ENCODE measurements at regions of chr17 and their contacts with region 1.

Region 1: DNA sequence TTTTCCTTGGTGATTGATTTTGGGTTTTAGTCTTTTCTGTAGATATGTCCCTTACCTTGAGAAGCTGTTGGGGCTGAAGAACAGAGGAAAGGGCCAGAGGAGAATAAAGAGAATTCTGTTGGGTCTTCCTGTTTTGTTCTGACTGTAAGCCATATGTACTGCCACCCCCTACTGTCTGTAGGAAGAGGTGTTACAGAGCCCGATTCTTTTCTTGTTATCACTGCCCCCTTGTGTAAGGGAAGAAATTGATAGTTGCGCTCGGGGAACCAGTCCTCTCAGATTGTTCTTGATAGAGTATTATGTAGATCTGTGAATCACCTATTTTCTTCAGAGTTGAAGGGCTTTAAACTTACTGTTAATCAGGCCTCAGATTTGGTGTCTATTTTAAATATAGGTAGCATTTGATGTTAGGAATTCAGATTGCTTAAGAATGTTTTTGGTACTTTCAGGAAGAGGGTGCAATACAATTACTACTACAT is 2.4 kb downstream of the TANC2 start:
- DNase-seq: peak; percentile 83
- ATAC-seq: peak; percentile 39
- H3K4me3 ChIP-seq: no peak overlapping the region
- H3K4me3 Mint-ChIP-seq: peak overlapping the region; percentile 74
- H3K27ac ChIP-seq: no peak overlapping the region
- H3K27ac Mint-ChIP-seq: peak overlapping the region; percentile 48
- H3K4me1 ChIP-seq: peaks cover 18 to 20% of the 10 kb centered on the region in 2 donors
- H3K4me1 Mint-ChIP-seq: peaks cover 21% of the 10 kb centered on the region
- H3K27me3 ChIP-seq: no peaks in the 10 kb centered on the region
- H3K27me3 Mint-ChIP-seq: no peaks in the 10 kb centered on the region
- CTCF ChIP-seq: peak; percentile 85

Region 2: DNA sequence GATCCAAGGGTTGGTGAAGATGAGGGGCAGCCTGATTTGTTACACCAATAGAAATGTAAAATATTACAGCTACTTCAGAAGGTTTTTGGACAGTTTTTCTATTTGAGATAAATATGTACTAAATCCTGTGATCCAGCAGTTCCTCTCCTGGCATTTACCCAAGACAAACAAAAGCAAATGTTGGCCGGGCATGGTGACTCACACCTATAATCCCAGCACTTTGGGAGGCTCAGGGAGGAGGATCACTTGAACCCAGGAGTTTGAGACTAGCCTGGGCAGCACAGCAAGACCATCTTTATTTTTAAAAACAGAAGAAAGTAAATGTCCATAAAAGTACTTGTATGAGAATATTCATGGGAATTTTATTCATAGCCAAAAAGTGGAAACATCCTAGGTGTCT is 405.8 kb before region 1 on chr17:
- CTCF ChIA-PET with region 1: no interaction called
- POLR2A ChIA-PET with region 1: no interaction called
- intact Hi-C with region 1: loop called (anchors 10 kb)
- DNase-seq: no peak
- ATAC-seq: no peak
- H3K4me3 ChIP-seq: no peak overlapping the region
- H3K4me3 Mint-ChIP-seq: no peak overlapping the region
- H3K27ac ChIP-seq: no peak overlapping the region
- H3K27ac Mint-ChIP-seq: no peak overlapping the region
- H3K4me1 ChIP-seq: no peaks in the 10 kb centered on the region
- H3K4me1 Mint-ChIP-seq: peaks cover 6% of the 10 kb centered on the region
- H3K27me3 ChIP-seq: no peaks in the 10 kb centered on the region
- H3K27me3 Mint-ChIP-seq: no peaks in the 10 kb centered on the region
- CTCF ChIP-seq: no peak

Region 3: GRCh38 chr17:62724398-62725146 is 243.9 kb before region 1 on chr17:
- CTCF ChIA-PET with region 1: no interaction called
- POLR2A ChIA-PET with region 1: no interaction called
- intact Hi-C with region 1: loop called (anchors 5 kb)
- DNase-seq: peak; percentile 85
- ATAC-seq: peak; percentile 88
- H3K4me3 ChIP-seq: peak overlapping the region in 4 of 5 experiments; percentile 21 to 56 (median 38)
- H3K4me3 Mint-ChIP-seq: peak overlapping the region; percentile 82
- H3K27ac ChIP-seq: peak overlapping the region; percentile 74 to 80
- H3K27ac Mint-ChIP-seq: peak overlapping the region; percentile 87
- H3K4me1 ChIP-seq: peaks cover 32 to 46% of the 10 kb centered on the region in 2 donors
- H3K4me1 Mint-ChIP-seq: peaks cover 39% of the 10 kb centered on the region
- H3K27me3 ChIP-seq: no peaks in the 10 kb centered on the region
- H3K27me3 Mint-ChIP-seq: peaks cover 7% of the 10 kb centered on the region
- CTCF ChIP-seq: no peak

Region 4: DNA sequence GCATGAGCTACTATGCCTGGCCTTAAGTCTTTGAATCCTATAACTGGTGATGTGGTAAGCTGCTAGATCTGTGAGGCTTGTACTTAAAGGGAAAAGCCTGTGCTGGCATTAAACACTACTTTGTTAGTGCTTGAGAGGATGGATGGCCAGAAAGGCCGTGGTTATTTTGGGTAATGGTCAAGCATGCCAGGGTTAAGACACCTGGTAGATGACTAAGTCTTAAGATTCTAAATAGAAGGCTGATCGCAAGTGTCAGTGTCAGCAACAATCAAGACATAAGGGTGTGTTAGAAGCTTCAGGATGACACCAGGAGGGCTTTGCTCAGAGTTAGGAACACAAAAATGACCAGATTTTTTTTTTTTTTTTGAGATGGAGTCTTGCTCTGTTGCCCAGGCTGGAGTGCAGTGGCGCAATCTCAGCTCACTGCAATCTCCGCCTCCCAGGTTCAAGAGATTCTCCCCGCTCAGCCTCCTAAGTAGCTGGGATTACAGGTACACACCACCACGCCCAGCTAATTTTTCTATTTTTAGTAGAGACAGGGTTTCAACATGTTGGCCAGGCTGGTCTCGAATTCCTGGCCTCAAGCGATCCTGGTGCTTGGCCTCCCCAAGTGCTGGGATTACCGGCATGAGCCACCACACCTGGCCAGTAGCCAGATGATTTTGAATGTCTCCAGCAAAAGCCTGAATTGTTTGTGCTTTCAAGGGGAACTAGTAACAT is 118.7 kb before region 1 on chr17:
- CTCF ChIA-PET with region 1: no interaction called
- POLR2A ChIA-PET with region 1: no interaction called
- intact Hi-C with region 1: no loop called
- DNase-seq: no peak
- ATAC-seq: no peak
- H3K4me3 ChIP-seq: no peak overlapping the region
- H3K4me3 Mint-ChIP-seq: no peak overlapping the region
- H3K27ac ChIP-seq: no peak overlapping the region
- H3K27ac Mint-ChIP-seq: no peak overlapping the region
- H3K4me1 ChIP-seq: no peaks in the 10 kb centered on the region
- H3K4me1 Mint-ChIP-seq: no peaks in the 10 kb centered on the region
- H3K27me3 ChIP-seq: no peaks in the 10 kb centered on the region
- H3K27me3 Mint-ChIP-seq: peaks cover 18% of the 10 kb centered on the region
- CTCF ChIP-seq: no peak

Measured in B cell (primary cell).